Left cardiac atrium (tissue), 4 donors: ENCODE measurements at regions of chr5 and their contacts with region 1.

Region 1: DNA sequence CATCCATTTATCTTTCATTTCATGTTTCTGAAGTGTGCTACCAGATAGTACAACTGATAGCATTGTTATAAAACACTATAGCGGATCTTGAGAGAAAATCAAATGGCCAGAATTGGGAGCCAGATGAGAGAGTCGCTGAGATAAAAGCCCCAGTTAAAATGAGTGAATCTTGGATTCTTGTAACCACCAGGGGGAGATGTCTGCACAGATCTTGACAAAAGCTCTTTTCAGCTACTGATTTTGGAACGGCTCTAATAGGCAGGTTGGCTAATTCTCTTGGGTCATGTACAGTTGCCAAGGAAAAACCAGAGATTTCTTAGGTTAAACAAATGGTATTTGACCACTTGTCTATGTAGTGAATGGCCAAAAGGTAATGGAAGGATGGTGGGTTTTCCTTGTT is 21.7 kb downstream of the F2RL2 start:
- DNase-seq: no peak
- ATAC-seq: peak; percentile 55 to 78

Region 2: DNA sequence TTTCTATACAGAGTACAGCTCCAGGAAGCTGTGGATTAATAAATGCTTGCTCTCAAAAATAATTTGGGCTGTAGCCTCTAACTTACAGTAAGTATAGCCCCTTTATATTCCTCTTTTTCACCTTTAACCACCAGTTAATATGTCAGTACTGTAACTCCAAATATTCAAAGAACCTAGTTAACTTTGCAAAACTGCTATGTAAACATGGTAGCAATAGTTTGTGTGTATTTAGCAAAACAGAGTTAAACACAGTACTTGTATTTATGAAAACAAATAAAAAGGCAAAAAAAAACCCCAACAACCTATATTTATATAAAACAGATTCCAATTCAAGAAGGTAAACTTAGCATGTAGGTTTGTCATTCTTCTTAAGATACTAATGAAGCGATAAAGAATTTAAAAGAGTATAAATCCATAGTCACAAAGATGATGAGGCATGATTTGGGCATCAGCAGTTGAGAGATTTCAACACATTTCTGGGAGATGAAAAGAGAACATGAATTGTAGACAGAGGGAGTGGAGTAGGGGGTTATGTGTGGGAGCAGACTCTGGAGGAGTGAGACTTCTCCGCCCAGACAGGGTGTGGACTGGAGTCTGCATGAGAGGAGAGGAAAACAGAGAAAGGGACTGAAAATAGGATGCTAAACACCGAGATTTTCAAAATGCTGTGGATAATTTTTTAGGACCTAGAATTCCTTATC is 170.4 kb after region 1 on chr5:
- intact Hi-C with region 1: loop called in 1 of 2 experiments (anchors 1 kb)
- DNase-seq: no peak
- ATAC-seq: peak in 1 of 2 donors; percentile 85

Region 3: GRCh38 chr5:77259476-77259875 is 658.0 kb after region 1 on chr5:
- intact Hi-C with region 1: no loop called
- DNase-seq: no peak
- ATAC-seq: no peak